ENCODE measurements at regions of chr3 and their contacts with region 1.

Region 1: DNA sequence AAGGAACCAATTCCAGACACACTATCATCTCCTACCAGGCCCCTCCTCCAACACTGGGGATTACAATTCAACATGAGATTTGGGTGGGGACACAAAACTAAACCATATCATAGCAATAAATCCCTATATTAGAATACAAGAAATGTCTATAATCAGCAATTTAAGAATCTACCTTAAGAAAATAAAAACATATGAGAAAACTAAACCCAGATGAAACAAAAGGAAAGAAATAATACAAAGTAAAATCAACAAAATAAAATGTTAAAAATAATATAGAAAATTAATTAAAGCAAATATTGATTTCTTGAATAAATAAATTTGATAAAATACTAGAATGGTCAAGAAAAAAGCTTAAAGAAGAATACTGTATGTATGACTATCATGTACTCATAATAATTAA is 6.1 kb upstream of the OSTN start:
- DNase-seq: no peak
- H3K4me3 ChIP-seq: no peak overlapping the region
- CTCF ChIP-seq: no peak
- POLR2A ChIP-seq: no peak

Region 2: GRCh38 chr3:191176038-191176785 is 16.7 kb before region 1 on chr3:
- intact Hi-C with region 1: loop called (anchors 1 kb)
- DNase-seq: no peak
- H3K4me3 ChIP-seq: no peak overlapping the region
- CTCF ChIP-seq: no peak
- POLR2A ChIP-seq: no peak

Region 3: GRCh38 chr3:191253089-191253799 is 60.3 kb after region 1 on chr3:
- intact Hi-C with region 1: no loop called
- DNase-seq: no peak
- H3K4me3 ChIP-seq: no peak overlapping the region
- CTCF ChIP-seq: no peak
- POLR2A ChIP-seq: no peak